Activated CD8-positive, alpha-beta T cell treated with anti-CD3 and anti-CD28 coated beads for 36 hours (primary cell): ENCODE measurements at regions of chr3 and their contacts with region 1.

Region 1: DNA sequence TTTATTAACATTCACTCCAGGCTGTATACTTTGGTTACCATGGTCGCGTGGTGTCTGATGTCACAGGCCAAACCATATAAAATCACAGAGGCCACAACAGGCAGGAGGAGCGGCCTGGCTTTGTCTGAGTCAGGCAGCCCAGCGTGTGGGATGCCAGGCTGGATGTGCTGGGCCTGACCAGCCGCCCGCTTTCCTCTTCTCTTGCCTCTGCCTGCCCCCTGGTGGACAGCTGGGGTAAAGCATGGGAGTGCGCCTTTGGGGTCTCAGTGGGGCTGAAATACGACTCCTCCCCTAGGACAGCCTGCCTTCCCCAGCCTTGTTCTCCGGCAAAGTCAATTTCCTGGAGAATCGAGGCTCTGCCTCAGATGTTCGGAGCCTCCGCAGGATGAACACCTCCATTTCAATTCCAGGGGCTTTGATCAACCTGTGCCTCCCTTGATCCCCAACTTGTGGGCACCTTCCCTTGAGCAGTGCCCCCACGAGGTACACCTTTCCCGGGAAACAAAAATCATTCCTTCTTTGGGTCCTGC is 78.2 kb downstream of the CCNL1 start:
- DNase-seq: peak; percentile 92
- ATAC-seq: peak; percentile 94
- H3K4me3 Mint-ChIP-seq: no peak overlapping the region
- H3K27ac Mint-ChIP-seq: peak overlapping the region; percentile 43
- H3K4me1 Mint-ChIP-seq: peaks cover 37% of the 10 kb centered on the region
- H3K27me3 Mint-ChIP-seq: no peaks in the 10 kb centered on the region
- CTCF ChIP-seq: peak; percentile 97

Region 2: DNA sequence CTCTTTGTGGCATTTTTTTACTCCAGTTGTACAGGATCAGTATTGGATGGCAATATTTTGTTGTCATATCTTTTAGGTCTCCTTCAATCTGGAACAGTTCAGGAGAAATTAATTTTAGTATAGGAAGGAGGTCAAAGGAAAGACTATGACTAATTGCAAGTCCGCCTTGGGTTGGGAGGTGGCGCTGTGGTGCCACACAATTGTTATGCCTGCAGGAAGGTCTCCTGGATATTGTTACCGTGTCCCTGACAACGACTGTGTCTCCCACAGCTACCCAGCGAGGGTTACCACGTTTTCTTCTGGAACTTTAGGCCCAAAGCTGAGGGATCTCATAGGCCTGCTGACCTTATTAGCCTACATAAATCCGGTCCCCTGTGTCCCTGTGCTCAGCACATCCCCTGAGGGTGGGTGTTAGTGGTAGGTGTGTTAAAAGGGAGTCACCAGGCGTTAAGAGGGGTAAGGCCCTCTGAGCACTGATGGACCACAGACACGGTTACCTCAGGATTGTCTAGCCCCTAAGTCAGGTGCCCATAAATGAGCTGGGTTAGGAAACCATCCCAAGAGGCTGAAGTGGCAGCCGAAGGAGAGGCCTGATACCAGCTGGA is 929.8 kb before region 1 on chr3:
- CTCF ChIA-PET with region 1: interaction called, 5 read pairs
- POLR2A ChIA-PET with region 1: no interaction called
- intact Hi-C with region 1: loop called (anchors 10 kb)
- DNase-seq: peak; percentile 79
- ATAC-seq: peak; percentile 66
- H3K4me3 Mint-ChIP-seq: no peak overlapping the region
- H3K27ac Mint-ChIP-seq: no peak overlapping the region
- H3K4me1 Mint-ChIP-seq: peaks cover 7% of the 10 kb centered on the region
- H3K27me3 Mint-ChIP-seq: no peaks in the 10 kb centered on the region
- CTCF ChIP-seq: peak; percentile 84

Region 3: GRCh38 chr3:156554842-156555687 is 526.7 kb before region 1 on chr3 and contains the start of gene SSR3:
- CTCF ChIA-PET with region 1: interaction called, 10 read pairs
- POLR2A ChIA-PET with region 1: no interaction called
- intact Hi-C with region 1: loop called (anchors 10 kb)
- DNase-seq: peak; percentile 100
- ATAC-seq: peak; percentile 100
- H3K4me3 Mint-ChIP-seq: peak within 1 kb of the TSS; percentile 94
- H3K27ac Mint-ChIP-seq: peak within 1 kb of the TSS; percentile 95
- H3K4me1 Mint-ChIP-seq: peaks cover 39% of the 10 kb centered on the region
- H3K27me3 Mint-ChIP-seq: no peaks in the 10 kb centered on the region
- CTCF ChIP-seq: no peak
- total RNA-seq, gene SSR3: 175 TPM

Region 4: GRCh38 chr3:156674046-156674910 is 407.5 kb before region 1 on chr3 and contains the start of gene TIPARP:
- CTCF ChIA-PET with region 1: interaction called, 6 read pairs
- POLR2A ChIA-PET with region 1: interaction called, 3 read pairs
- intact Hi-C with region 1: loop called (anchors 2 kb)
- DNase-seq: peak; percentile 98
- ATAC-seq: peak; percentile 87
- H3K4me3 Mint-ChIP-seq: peak within 1 kb of the TSS; percentile 93
- H3K27ac Mint-ChIP-seq: peak within 1 kb of the TSS; percentile 89
- H3K4me1 Mint-ChIP-seq: peaks cover 30% of the 10 kb centered on the region
- H3K27me3 Mint-ChIP-seq: peaks cover 2% of the 10 kb centered on the region
- CTCF ChIP-seq: no peak
- total RNA-seq, gene TIPARP: 28.0 to 30.0 TPM

Region 5: GRCh38 chr3:156826144-156826895 is 255.4 kb before region 1 on chr3 and contains the start of gene LEKR1:
- CTCF ChIA-PET with region 1: interaction called, 8 read pairs
- POLR2A ChIA-PET with region 1: no interaction called
- intact Hi-C with region 1: loop called (anchors 5 kb)
- DNase-seq: peak; percentile 72
- ATAC-seq: peak; percentile 78
- H3K4me3 Mint-ChIP-seq: peak within 1 kb of the TSS; percentile 87
- H3K27ac Mint-ChIP-seq: peak within 1 kb of the TSS; percentile 95
- H3K4me1 Mint-ChIP-seq: peaks cover 26% of the 10 kb centered on the region
- H3K27me3 Mint-ChIP-seq: no peaks in the 10 kb centered on the region
- CTCF ChIP-seq: no peak
- total RNA-seq, gene LEKR1: 0.40 to 1.1 TPM

Region 6: GRCh38 chr3:157064402-157064801 is 17.3 kb before region 1 on chr3:
- CTCF ChIA-PET with region 1: interaction called, 12 read pairs
- POLR2A ChIA-PET with region 1: no interaction called
- intact Hi-C with region 1: no loop called
- DNase-seq: no peak
- ATAC-seq: no peak
- H3K4me3 Mint-ChIP-seq: no peak overlapping the region
- H3K27ac Mint-ChIP-seq: no peak overlapping the region
- H3K4me1 Mint-ChIP-seq: peaks cover 26% of the 10 kb centered on the region
- H3K27me3 Mint-ChIP-seq: no peaks in the 10 kb centered on the region
- CTCF ChIP-seq: no peak

Region 7: GRCh38 chr3:157130467-157131251 is 48.9 kb after region 1 on chr3:
- CTCF ChIA-PET with region 1: interaction called, 84 read pairs
- POLR2A ChIA-PET with region 1: interaction called, 6 read pairs
- intact Hi-C with region 1: no loop called
- DNase-seq: peak; percentile 90
- ATAC-seq: peak; percentile 26
- H3K4me3 Mint-ChIP-seq: peak overlapping the region; percentile 50
- H3K27ac Mint-ChIP-seq: peak overlapping the region; percentile 96
- H3K4me1 Mint-ChIP-seq: peaks cover 74% of the 10 kb centered on the region
- H3K27me3 Mint-ChIP-seq: no peaks in the 10 kb centered on the region
- CTCF ChIP-seq: peak; percentile 77

Region 8: GRCh38 chr3:157532529-157533297 is 451.0 kb after region 1 on chr3:
- CTCF ChIA-PET with region 1: no interaction called
- POLR2A ChIA-PET with region 1: no interaction called
- intact Hi-C with region 1: no loop called
- DNase-seq: peak; percentile 12
- ATAC-seq: peak; percentile 66
- H3K4me3 Mint-ChIP-seq: no peak overlapping the region
- H3K27ac Mint-ChIP-seq: no peak overlapping the region
- H3K4me1 Mint-ChIP-seq: no peaks in the 10 kb centered on the region
- H3K27me3 Mint-ChIP-seq: peaks cover 1% of the 10 kb centered on the region
- CTCF ChIP-seq: peak; percentile 64